Posterior cingulate gyrus (tissue), 11 donors: ENCODE measurements at regions of chr1 and their contacts with region 1.

Region 1: DNA sequence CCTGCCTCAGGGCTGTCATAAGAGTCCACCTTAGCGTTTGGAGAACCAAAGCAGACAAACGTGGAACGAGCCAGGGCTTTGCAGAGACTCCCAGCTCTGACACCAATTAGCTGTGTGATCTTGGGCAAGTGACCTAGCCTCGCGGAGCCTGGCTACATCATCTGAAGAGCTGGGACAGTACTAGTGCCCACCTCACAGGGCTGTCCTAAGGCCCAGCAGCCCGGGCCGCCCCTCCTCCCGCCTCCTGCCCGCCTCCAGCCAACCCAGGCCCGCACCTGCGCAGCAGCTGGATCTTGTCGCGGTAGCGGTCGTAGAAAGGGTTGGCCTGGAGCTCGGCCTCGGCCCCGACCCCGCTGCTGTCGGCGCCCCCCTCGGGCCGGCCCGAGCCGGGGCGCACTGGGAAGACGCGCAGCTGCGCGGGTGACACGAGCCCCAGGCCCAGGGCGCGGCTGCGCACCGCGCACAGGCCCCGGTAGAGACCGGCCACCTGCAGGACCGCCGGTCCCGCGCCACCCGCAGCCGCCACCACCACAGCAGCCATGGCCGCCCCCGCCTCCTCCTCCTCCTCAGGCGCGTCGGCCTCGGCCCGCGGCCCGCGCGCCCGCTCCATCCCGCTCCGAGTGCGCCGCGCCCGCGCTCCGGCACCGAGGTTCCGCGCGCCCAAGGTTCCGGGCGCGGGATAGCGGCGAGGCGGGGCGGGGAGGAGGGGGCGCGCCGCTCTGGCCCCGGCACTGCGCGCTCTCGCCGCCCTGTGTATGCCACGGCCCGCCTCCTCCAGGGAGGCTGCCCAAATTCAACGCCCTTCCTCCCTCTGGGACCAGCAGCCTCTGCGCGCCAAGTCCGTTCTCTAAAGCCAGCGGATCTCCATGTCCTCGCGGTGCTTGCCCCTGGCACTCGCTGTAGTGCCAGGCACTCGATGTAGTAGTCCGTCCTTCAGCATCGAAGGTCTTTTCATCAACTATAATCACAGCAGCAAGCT is at the start of gene ATPAF1:
- DNase-seq: peak; percentile 48 to 95 (median 70)

Region 2: GRCh38 chr1:46197964-46198811 is 469.9 kb before region 1 on chr1 and contains the start of gene POMGNT1:
- intact Hi-C with region 1: no loop called
- DNase-seq: peak; percentile 48 to 95 (median 68)

Region 3: DNA sequence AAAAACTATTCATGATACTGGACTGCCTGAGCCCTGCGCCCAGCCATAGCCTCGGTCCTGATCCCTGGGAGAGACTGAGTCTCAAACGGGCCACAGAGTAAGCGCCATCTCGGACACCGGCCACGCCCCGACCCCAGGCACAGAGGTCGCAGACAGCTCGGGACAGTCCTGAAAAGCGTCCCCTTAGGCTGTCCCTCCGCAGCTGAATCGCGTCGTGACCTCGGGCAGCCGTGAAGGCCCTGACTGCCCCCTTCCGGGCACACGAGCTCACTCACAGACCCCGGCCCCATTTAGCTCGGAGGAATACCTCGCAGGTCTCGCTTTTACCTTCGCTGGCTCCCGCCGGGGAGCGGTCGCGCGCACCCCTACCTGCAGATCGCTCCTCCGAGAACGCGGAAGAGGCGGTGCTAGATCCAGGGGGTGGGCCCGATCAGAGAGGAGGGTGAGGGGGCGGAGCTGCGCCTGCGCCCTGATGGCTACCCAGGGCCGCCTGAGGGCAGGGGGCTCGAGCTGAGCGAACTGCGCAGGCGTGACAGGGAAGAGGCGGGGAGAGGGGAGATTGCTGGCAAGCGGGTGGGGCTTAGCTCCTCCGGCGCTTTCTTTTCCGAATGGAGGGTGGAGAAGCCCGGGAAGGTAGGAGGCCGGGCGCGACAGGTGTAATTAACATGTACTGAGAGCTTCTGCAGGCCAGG is 64.1 kb before region 1 on chr1 and contains the start of gene MKNK1:
- intact Hi-C with region 1: loop called (anchors 10 kb)
- DNase-seq: peak; percentile 76 to 99 (median 93)

Region 4: GRCh38 chr1:46718727-46719622 is 50.9 kb after region 1 on chr1 and contains the start of gene EFCAB14:
- intact Hi-C with region 1: loop called (anchors 2 kb)
- DNase-seq: peak; percentile 92 to 99 (median 96)